ENCODE measurements at regions of chr20 and their contacts with region 1.

Region 1: DNA sequence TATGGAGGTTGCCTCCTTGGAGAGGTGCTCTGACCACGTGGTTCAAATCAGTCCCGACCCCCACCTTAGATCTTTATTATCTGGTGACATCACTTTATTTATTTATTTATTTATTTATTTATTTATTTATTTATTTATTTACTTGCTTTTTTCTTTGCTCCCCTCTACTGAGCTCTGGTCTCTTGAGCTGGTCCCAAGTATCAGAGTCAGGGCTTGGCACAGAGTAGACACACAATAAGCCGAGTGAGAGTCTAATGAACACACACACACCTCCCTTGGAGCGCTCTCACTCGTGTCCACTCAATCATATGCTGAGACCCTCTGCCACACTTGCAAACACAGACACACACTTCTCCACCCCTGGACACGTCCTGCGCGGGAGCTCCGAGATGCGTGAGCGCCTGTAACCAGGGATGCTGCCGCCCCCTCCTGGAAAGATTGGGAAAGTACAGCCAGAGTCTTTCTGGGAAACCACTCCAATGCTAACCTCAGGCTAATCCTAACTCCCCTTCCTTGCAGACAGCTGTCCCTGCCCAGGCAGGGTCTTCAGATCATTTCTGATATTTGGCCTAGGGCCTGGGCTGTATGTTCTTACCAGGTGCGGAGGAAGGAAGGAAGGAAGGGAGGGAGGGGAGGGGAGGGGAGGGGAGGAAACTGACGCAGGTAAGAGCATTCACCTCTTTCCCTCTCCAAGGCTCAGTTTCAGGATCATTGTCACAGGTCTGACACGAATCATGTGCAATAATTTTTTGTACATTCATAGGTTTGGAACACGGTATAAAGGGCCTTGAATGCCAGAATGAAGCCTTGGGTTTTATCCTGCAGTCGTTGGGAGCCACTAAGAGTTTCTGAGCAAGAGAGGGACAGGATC is 70.9 kb downstream of the STK35 start:
- DNase-seq: peak; percentile 82
- ATAC-seq: peak; percentile 88

Region 2: DNA sequence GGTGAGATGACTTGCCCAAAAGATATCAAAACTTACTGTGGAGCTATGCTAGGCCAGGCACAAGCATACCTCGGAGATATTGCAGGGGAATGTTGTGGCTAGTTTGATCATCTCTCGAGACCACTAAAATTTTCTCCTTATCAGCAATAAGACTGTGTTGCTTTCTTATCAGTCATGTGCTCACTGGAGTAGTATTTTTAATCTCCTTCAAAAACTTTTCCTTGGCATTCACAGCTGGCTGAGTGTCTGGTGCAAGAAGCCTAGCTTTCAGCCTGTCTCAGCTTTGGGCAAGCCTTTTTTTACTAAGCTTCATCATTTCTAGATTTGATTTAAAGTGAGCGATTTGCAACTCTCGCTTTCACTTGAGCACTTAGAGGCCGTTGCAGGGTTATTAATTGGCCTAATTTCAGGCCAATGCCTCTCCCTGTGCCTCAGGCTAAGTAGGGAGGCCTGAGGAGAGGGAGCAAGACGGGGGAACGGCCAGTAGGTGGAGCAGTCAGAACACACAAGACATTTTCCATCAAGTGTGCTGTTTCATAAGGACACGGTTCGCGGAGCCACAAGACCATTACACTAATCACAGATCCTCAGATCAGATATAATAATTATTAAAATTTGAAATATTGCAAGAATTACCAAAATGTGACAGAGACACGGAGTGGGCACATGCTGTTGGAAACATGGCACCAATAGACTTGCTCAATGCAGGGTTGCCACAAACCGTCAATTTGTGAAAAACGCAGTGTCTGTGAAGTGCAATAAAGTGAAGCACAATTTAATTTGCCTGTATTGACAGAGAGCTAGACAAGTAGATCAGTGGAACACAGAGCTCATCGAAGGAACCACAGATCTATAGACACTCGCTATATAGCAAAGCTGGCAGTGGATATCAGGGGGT is 408.2 kb before region 1 on chr20:
- intact Hi-C with region 1: loop called (anchors 10 kb)
- DNase-seq: peak; percentile 84
- ATAC-seq: peak; percentile 97

Region 3: GRCh38 chr20:1965520-1966351 is 206.8 kb before region 1 on chr20:
- intact Hi-C with region 1: loop called (anchors 10 kb)
- DNase-seq: peak; percentile 85
- ATAC-seq: peak; percentile 90

Region 4: GRCh38 chr20:2086177-2086979 is 86.2 kb before region 1 on chr20:
- intact Hi-C with region 1: loop called (anchors 2 kb)
- DNase-seq: no peak
- ATAC-seq: peak; percentile 75

Region 5: DNA sequence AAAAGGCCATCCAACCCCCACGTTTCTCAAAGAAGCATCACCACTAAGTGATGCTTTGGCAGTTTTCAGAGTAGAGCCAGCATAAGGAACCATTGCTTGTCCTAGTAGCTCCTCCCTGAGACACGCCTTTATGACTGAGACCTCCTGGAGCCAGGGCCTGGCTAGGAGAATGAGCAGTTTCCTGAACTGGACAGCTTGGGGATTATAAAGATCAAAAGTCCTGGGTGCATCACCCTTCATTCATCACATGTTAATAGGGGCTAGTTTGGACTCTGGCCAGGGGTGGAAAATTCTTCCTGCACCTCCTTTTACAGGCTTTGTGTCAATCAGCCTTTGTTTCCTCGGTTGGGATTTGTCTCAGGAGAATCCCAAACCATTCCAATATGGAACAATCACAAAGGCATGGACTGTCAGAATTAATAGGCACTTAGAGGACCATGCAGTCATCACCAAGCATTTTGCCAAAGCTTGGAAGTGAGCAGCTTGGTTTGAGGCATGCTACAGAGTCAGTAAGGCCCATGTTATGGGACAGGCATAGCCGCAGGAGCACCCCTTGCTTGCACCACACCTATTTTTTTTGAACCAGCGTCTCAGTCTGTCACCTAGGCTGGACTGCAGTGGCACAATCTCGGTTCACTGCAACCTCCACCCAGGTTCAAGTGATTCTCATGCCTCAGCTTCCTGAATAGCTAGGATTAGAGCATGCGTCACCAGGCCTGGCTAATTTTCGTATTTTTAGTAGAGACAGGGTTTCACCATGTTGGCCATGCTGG is 58.4 kb after region 1 on chr20:
- intact Hi-C with region 1: no loop called
- DNase-seq: no peak
- ATAC-seq: no peak

Region 6: GRCh38 chr20:2387180-2387577 is 214.6 kb after region 1 on chr20:
- intact Hi-C with region 1: no loop called
- DNase-seq: no peak
- ATAC-seq: no peak